CD8-positive, alpha-beta T cell (primary cell): ENCODE measurements at regions of chr6 and their contacts with region 1.

Region 1: GRCh38 chr6:27479319-27480182 is 6.6 kb upstream of the ZNF184 start:
- DNase-seq: peak; percentile 83 to 97 (median 87)
- ATAC-seq: peak; percentile 69
- H3K4me3 ChIP-seq: peak overlapping the region; percentile 79 to 96
- H3K4me3 Mint-ChIP-seq: no peak overlapping the region
- H3K27ac ChIP-seq: peak overlapping the region; percentile 96 to 99
- H3K27ac Mint-ChIP-seq: no peak overlapping the region
- H3K4me1 ChIP-seq: peaks cover 13% of the 10 kb centered on the region
- H3K4me1 Mint-ChIP-seq: peaks cover 9% of the 10 kb centered on the region
- H3K27me3 ChIP-seq: no peaks in the 10 kb centered on the region
- H3K27me3 Mint-ChIP-seq: no peaks in the 10 kb centered on the region
- CTCF ChIP-seq: no peak

Region 2: DNA sequence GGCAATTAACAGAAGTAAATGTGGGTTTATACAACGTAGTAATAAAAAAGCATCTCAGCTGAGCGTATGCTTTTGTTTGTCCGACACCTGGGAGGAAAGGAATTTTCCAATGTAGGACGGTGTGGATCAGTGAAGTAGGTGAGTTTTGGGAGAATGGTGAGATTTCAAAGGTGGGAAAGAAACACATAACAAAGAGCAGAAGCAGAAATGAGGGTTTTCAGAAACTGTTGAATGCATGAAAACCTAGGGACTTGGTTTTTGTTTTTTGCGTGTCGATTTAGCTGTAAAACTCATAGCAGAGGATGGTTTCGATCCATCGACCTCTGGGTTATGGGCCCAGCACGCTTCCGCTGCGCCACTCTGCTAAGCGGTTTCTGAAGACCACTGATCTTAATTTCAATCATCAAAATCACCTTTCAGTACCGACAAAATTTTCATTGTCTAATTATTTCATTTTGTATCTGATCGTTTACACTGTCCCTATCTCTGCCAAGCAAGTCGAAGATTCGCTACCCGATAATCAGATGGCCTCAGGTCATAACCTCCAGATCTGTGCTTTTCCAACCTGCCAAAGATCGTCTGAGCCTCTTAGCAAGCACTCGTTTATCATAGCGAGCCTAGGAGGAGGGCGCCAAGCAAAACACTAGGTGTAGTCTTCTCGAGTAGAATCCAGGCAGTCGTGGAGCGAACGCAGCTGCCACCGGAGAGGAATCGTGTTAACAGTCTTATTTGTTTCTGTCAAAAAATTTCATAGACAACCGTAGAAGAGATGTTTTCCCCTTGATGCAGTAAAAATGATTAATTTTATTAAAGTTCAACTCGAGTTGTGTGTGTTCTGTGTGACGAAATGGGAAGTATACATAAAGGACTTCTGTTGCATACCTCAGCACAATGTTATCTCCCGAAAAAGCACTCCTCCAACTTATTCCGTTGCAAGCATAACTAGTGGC is 146.6 kb before region 1 on chr6:
- CTCF ChIA-PET with region 1: no interaction called
- POLR2A ChIA-PET with region 1: no interaction called
- intact Hi-C with region 1: loop called in 1 of 2 experiments (anchors 2 kb)
- DNase-seq: peak in 8 of 9 experiments; percentile 12 to 78 (median 60)
- ATAC-seq: peak; percentile 86
- H3K4me3 ChIP-seq: peak overlapping the region; percentile 53
- H3K4me3 Mint-ChIP-seq: peak overlapping the region; percentile 87
- H3K27ac ChIP-seq: no peak overlapping the region
- H3K27ac Mint-ChIP-seq: peak overlapping the region; percentile 82
- H3K4me1 ChIP-seq: no peaks in the 10 kb centered on the region
- H3K4me1 Mint-ChIP-seq: peaks cover 15% of the 10 kb centered on the region
- H3K27me3 ChIP-seq: peaks cover 0 to 4% of the 10 kb centered on the region in 2 experiments
- H3K27me3 Mint-ChIP-seq: peaks cover 21% of the 10 kb centered on the region
- CTCF ChIP-seq: no peak

Region 3: GRCh38 chr6:27400877-27401642 is 78.5 kb before region 1 on chr6:
- CTCF ChIA-PET with region 1: no interaction called
- POLR2A ChIA-PET with region 1: no interaction called
- intact Hi-C with region 1: no loop called
- DNase-seq: no peak
- ATAC-seq: no peak
- H3K4me3 ChIP-seq: no peak overlapping the region
- H3K4me3 Mint-ChIP-seq: no peak overlapping the region
- H3K27ac ChIP-seq: no peak overlapping the region
- H3K27ac Mint-ChIP-seq: no peak overlapping the region
- H3K4me1 ChIP-seq: no peaks in the 10 kb centered on the region
- H3K4me1 Mint-ChIP-seq: no peaks in the 10 kb centered on the region
- H3K27me3 ChIP-seq: no peaks in the 10 kb centered on the region
- H3K27me3 Mint-ChIP-seq: no peaks in the 10 kb centered on the region
- CTCF ChIP-seq: no peak

Region 4: GRCh38 chr6:27503436-27504030 is 24.0 kb after region 1 on chr6:
- CTCF ChIA-PET with region 1: interaction called, 6 read pairs
- POLR2A ChIA-PET with region 1: interaction called, 23 read pairs
- intact Hi-C with region 1: loop called (anchors 1 kb)
- DNase-seq: peak; percentile 58 to 90 (median 79)
- ATAC-seq: peak; percentile 62
- H3K4me3 ChIP-seq: peak overlapping the region; percentile 61 to 70
- H3K4me3 Mint-ChIP-seq: peak overlapping the region; percentile 94
- H3K27ac ChIP-seq: peak overlapping the region; percentile 34 to 46
- H3K27ac Mint-ChIP-seq: peak overlapping the region; percentile 90
- H3K4me1 ChIP-seq: peaks cover 11% of the 10 kb centered on the region
- H3K4me1 Mint-ChIP-seq: peaks cover 38% of the 10 kb centered on the region
- H3K27me3 ChIP-seq: peaks cover 0 to 7% of the 10 kb centered on the region in 2 experiments
- H3K27me3 Mint-ChIP-seq: peaks cover 4% of the 10 kb centered on the region
- CTCF ChIP-seq: no peak

Region 5: DNA sequence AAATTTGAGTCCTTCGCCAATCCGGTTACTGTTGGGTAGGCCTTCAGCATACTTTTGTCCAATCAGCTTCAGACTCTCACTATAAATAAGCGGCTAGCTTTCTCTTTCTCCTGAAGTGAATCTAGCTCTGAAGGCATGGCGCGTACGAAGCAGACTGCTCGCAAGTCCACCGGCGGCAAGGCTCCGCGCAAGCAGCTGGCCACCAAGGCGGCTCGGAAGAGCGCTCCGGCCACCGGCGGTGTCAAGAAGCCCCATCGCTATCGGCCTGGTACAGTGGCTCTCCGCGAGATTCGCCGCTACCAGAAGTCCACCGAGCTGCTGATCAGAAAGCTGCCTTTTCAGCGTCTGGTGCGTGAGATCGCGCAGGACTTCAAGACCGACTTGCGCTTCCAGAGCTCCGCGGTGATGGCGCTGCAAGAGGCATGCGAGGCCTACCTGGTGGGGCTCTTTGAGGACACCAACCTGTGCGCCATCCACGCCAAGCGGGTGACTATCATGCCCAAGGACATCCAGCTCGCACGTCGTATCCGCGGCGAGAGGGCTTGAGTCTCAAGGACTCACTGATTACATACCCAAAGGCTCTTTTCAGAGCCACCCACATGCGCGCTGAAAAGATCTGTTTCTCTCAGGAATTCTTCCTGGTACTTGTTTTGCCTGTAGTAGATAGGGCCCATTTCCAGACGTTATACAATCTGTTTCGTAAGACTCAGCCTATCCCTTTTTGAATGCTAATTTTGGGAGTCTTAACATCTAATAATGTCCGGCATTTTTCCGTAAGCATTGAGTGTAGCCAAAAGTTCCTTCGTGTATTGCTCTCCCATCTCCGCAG is 330.6 kb after region 1 on chr6:
- CTCF ChIA-PET with region 1: no interaction called
- POLR2A ChIA-PET with region 1: interaction called, 11 read pairs
- intact Hi-C with region 1: no loop called
- DNase-seq: peak; percentile 63 to 96 (median 74)
- ATAC-seq: peak; percentile 60
- H3K4me3 ChIP-seq: peak overlapping the region; percentile 52 to 65
- H3K4me3 Mint-ChIP-seq: peak overlapping the region; percentile 95
- H3K27ac ChIP-seq: peak overlapping the region; percentile 83 to 87
- H3K27ac Mint-ChIP-seq: peak overlapping the region; percentile 99
- H3K4me1 ChIP-seq: peaks cover 36% of the 10 kb centered on the region
- H3K4me1 Mint-ChIP-seq: peaks cover 57% of the 10 kb centered on the region
- H3K27me3 ChIP-seq: no peaks in the 10 kb centered on the region
- H3K27me3 Mint-ChIP-seq: no peaks in the 10 kb centered on the region
- CTCF ChIP-seq: no peak

Region 6: DNA sequence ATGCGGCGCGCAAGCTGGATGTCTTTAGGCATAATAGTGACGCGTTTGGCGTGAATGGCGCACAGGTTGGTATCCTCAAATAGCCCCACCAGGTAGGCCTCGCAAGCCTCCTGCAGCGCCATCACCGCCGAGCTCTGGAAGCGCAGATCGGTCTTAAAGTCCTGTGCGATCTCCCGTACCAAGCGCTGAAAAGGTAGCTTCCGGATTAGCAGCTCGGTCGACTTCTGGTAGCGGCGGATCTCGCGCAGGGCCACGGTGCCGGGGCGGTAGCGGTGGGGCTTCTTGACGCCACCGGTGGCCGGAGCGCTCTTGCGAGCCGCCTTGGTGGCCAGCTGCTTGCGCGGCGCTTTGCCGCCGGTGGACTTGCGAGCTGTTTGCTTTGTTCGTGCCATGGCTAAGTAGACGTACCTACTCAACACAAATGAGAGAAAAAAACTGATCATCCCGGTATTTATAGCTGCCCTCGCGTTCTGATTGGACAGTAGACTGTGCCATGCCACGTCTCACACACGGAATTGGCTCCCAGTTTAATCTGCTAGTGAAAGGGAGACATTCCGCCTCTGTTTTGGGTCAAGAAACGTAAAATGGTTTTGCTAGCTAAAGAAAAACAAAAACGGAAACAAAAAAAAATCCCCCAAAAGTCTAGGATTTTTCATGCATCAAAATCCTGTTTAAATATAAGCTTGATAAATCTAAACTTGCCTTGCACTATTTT is 392.5 kb after region 1 on chr6:
- CTCF ChIA-PET with region 1: no interaction called
- POLR2A ChIA-PET with region 1: interaction called, 16 read pairs
- intact Hi-C with region 1: no loop called
- DNase-seq: peak; percentile 72 to 97 (median 85)
- ATAC-seq: peak; percentile 75
- H3K4me3 ChIP-seq: peak overlapping the region; percentile 54 to 67
- H3K4me3 Mint-ChIP-seq: peak overlapping the region; percentile 82
- H3K27ac ChIP-seq: peak overlapping the region; percentile 81 to 86
- H3K27ac Mint-ChIP-seq: peak overlapping the region; percentile 98
- H3K4me1 ChIP-seq: peaks cover 20% of the 10 kb centered on the region
- H3K4me1 Mint-ChIP-seq: peaks cover 36% of the 10 kb centered on the region
- H3K27me3 ChIP-seq: peaks cover 0 to 3% of the 10 kb centered on the region in 2 experiments
- H3K27me3 Mint-ChIP-seq: no peaks in the 10 kb centered on the region
- CTCF ChIP-seq: peak; percentile 48

Region 7: GRCh38 chr6:28251661-28252008 is 772.1 kb after region 1 on chr6:
- CTCF ChIA-PET with region 1: no interaction called
- POLR2A ChIA-PET with region 1: no interaction called
- intact Hi-C with region 1: no loop called
- DNase-seq: peak in 7 of 9 experiments; percentile 10 to 62 (median 31)
- ATAC-seq: peak; percentile 75
- H3K4me3 ChIP-seq: peak overlapping the region; percentile 85 to 94
- H3K4me3 Mint-ChIP-seq: peak overlapping the region; percentile 98
- H3K27ac ChIP-seq: peak overlapping the region; percentile 50 to 66
- H3K27ac Mint-ChIP-seq: peak overlapping the region; percentile 97
- H3K4me1 ChIP-seq: peaks cover 18% of the 10 kb centered on the region
- H3K4me1 Mint-ChIP-seq: peaks cover 42% of the 10 kb centered on the region
- H3K27me3 ChIP-seq: no peaks in the 10 kb centered on the region
- H3K27me3 Mint-ChIP-seq: peaks cover 3% of the 10 kb centered on the region
- CTCF ChIP-seq: no peak